ENCODE measurements at regions of chr14 and their contacts with region 1.

Region 1: DNA sequence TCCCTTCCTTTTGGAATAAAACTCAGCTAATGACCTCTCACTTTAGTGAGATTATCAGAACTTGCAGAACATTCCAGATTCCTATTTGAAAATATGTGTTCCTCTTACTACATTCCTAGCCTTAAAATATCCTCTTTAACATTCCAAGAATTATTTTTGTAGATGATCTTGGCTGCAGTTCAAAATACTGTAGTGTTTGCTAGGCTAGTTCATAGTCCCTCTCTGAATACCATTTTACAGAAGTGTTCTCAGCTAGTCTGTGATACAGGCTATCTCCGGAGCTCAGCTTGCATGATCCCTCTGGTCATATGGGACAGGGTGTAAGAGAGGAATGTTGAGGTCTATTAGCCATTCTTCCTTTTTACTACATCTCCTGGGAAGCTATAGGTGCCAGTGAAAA is 17.6 kb upstream of the GPR33 start:
- DNase-seq: no peak
- ATAC-seq: peak; percentile 61

Region 2: GRCh38 chr14:31993521-31993951 is 488.1 kb after region 1 on chr14:
- intact Hi-C with region 1: no loop called
- DNase-seq: no peak
- ATAC-seq: no peak

Region 3: DNA sequence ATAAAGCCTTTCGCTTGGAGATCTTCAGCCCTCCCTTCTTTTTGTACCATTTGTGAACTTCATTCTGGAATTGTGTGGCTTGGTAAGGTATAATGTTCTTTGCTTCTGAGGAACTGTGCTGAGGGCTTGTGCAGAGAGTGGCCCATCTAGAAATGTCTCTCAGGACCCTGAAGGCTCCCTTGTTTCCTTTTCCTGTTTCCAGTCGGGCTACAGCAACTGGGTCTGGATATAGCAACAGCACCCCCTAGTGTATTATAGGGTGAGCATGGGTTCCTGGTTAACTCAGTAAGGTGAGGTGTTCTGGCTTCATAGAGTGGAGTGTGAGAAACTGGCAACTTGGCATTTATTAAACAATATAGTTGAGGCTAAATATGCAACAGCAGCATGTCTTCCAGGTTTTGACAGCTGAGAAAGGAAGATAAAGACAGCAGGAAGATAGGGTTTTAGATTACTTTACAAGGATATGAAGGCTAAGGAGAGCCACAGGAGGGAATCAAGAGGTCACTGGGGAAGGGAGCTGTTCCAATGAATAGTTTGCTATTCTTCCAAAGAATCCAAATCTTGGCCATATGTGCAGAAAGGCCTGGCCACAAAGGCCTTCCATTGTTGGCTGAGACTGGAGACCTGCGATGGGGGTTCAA is 746.7 kb after region 1 on chr14:
- intact Hi-C with region 1: loop called (anchors 5 kb)
- DNase-seq: no peak
- ATAC-seq: peak; percentile 83